Naive thymus-derived CD4-positive, alpha-beta T cell (primary cell): ENCODE measurements at regions of chr20 and their contacts with region 1.

Region 1: GRCh38 chr20:31849455-31849925 is 4.1 kb upstream of the FOXS1 start:
- DNase-seq: no peak
- ATAC-seq: no peak
- H3K4me3 ChIP-seq: no peak overlapping the region
- H3K4me3 Mint-ChIP-seq: no peak overlapping the region
- H3K27ac ChIP-seq: no peak overlapping the region
- H3K27ac Mint-ChIP-seq: no peak overlapping the region
- H3K4me1 ChIP-seq: no peaks in the 10 kb centered on the region
- H3K4me1 Mint-ChIP-seq: no peaks in the 10 kb centered on the region
- H3K27me3 ChIP-seq: no peaks in the 10 kb centered on the region
- H3K27me3 Mint-ChIP-seq: peaks cover 15 to 32% (median 18%) of the 10 kb centered on the region in 5 donors

Region 2: GRCh38 chr20:31547017-31547675 is 302.3 kb before region 1 on chr20:
- CTCF ChIA-PET with region 1: no interaction called
- POLR2A ChIA-PET with region 1: no interaction called
- intact Hi-C with region 1: no loop called
- DNase-seq: peak; percentile 56 to 84 (median 80)
- ATAC-seq: peak; percentile 92
- H3K4me3 ChIP-seq: peak overlapping the region; percentile 85
- H3K4me3 Mint-ChIP-seq: peak overlapping the region; percentile 86 to 99 (median 94)
- H3K27ac ChIP-seq: peak overlapping the region; percentile 87
- H3K27ac Mint-ChIP-seq: peak overlapping the region; percentile 94 to 100 (median 98)
- H3K4me1 ChIP-seq: peaks cover 0 to 6% of the 10 kb centered on the region in 2 donors
- H3K4me1 Mint-ChIP-seq: peaks cover 8 to 36% (median 28%) of the 10 kb centered on the region in 7 donors
- H3K27me3 ChIP-seq: no peaks in the 10 kb centered on the region
- H3K27me3 Mint-ChIP-seq: no peaks in the 10 kb centered on the region

Region 3: DNA sequence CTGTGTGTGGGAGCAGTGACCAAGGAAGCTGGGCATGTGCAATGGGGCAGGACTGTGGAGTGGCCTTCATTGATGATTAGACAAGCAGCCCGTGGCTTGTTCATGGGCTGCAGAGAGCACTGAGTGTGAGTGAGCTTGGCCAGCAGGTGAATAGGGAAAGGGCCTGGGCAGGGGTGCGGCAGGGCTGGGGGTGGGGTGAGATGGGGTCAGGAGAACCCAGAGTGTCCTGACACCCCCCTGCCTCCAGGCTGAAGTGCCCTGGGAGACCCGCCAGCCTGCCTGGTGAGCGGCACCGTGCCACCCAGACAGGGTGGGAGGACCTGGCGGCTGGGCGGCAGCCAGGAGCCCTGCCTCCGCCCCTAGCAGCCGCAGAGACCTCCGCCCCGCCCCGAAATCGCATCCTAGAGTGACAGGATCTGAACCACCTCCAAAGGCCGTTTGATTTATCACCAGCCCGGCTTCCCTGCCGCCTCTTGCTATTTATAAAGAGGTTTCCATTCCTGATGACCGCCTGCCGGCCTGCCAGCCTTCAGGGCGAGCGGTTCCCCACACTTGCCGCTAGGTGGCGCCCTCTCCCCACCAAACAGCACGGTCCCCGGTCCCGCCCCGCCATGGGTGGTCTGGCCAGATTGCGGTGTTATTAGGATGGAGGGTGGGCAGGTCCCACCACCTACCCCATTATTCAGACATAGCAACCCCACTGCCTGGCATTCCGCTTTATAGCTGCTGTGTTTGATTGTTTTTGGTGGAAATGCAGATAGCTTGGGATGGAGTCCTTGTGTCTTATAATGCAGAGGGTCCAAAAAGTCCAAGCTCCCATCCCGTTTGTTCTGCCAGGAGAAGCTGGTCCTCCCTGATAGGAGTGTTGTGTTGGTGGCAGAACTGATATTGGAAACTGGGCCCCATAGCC is 26.8 kb before region 1 on chr20:
- CTCF ChIA-PET with region 1: interaction called, 5 read pairs
- POLR2A ChIA-PET with region 1: no interaction called
- intact Hi-C with region 1: loop called (anchors 1 kb)
- DNase-seq: peak; percentile 40 to 80 (median 73)
- ATAC-seq: peak; percentile 91
- H3K4me3 ChIP-seq: no peak overlapping the region
- H3K4me3 Mint-ChIP-seq: peak overlapping the region in 5 of 10 donors; percentile 27 to 47 (median 30)
- H3K27ac ChIP-seq: no peak overlapping the region
- H3K27ac Mint-ChIP-seq: peak overlapping the region in 2 of 9 donors; percentile 47 to 59
- H3K4me1 ChIP-seq: peaks cover 0 to 4% of the 10 kb centered on the region in 2 donors
- H3K4me1 Mint-ChIP-seq: peaks cover 0 to 9% (median 0%) of the 10 kb centered on the region in 7 donors
- H3K27me3 ChIP-seq: no peaks in the 10 kb centered on the region
- H3K27me3 Mint-ChIP-seq: peaks cover 0 to 4% (median 0%) of the 10 kb centered on the region in 5 donors